Lower leg skin (tissue), 4 donors: ENCODE measurements at regions of chr19 and their contacts with region 1.

Region 1: GRCh38 chr19:6632002-6632621 is 37.8 kb downstream of the TNFSF14 start:
- DNase-seq: peak; percentile 85 to 90
- H3K4me3 ChIP-seq: no peak overlapping the region
- CTCF ChIP-seq: no peak
- POLR2A ChIP-seq: no peak

Region 2: GRCh38 chr19:6481541-6482342 is 150.4 kb before region 1 on chr19 and contains the start of gene DENND1C:
- intact Hi-C with region 1: no loop called
- DNase-seq: no peak
- H3K4me3 ChIP-seq: no peak within 1 kb of the TSS
- CTCF ChIP-seq: no peak
- POLR2A ChIP-seq: no peak
- total RNA-seq, gene DENND1C: 0.61 to 1.9 (median 1.2) TPM

Region 3: DNA sequence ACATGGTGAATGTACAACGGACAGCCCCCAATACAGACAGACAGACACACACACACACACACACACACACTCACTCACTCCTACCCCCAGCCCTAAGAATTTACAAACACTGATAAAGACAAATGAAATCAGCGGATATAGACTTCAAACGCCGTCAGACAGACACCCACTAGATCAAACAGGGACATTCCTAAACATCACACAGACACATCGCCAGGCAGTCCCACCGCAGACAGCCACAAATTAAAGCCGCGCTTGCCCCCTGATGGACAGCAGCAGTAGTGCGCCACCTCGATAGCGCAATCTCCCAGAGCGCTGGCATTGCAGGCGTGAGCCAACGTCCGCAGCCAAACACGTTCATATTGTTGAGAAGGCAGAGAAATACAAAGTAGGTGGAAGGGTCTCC is 230.6 kb after region 1 on chr19:
- intact Hi-C with region 1: loop called (anchors 5 kb)
- DNase-seq: peak; percentile 78 to 96
- H3K4me3 ChIP-seq: no peak overlapping the region
- CTCF ChIP-seq: peak in 1 of 3 donors; percentile 96
- POLR2A ChIP-seq: no peak